ENCODE measurements at regions of chr14 and their contacts with region 1.

Region 1: GRCh38 chr14:69726761-69727511 is 40.0 kb upstream of the SRSF5 start:
- DNase-seq: peak; percentile 84
- ATAC-seq: peak; percentile 95
- H3K4me3 Mint-ChIP-seq: peak overlapping the region; percentile 64
- H3K27ac Mint-ChIP-seq: peak overlapping the region; percentile 78
- H3K4me1 Mint-ChIP-seq: peaks cover 36% of the 10 kb centered on the region
- H3K27me3 Mint-ChIP-seq: peaks cover 8% of the 10 kb centered on the region

Region 2: DNA sequence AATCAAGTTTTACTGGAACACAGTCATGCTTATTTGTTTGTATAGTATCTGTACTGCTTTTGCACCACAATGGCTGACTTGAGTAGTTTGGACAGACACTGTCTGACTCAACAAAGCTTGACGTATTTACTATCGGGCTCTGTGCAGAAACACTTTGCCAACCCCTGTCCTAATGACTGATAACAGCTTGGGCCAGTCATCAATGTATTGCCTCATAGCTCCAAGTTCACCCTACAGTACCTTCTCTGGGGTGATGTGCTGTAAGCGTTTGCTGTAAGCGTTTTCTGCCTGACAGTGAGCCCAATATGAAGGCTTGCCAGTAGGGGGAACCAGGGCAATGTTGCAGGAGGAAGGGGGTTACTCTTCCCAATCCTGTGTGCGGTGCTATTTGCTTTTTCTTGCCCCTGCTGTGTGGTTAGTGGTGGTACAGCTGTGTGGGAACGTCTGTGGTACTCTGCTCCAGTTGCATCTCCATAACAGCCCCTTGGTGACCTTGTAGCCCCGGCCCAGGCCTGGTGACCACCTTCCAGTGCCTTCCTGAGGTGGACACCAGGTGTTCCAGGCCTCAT is 146.8 kb before region 1 on chr14:
- CTCF ChIA-PET with region 1: interaction called, 44 read pairs
- POLR2A ChIA-PET with region 1: interaction called, 4 read pairs
- DNase-seq: peak; percentile 42
- ATAC-seq: peak; percentile 42
- H3K4me3 Mint-ChIP-seq: no peak overlapping the region
- H3K27ac Mint-ChIP-seq: no peak overlapping the region
- H3K4me1 Mint-ChIP-seq: peaks cover 2% of the 10 kb centered on the region
- H3K27me3 Mint-ChIP-seq: peaks cover 34% of the 10 kb centered on the region

Region 3: DNA sequence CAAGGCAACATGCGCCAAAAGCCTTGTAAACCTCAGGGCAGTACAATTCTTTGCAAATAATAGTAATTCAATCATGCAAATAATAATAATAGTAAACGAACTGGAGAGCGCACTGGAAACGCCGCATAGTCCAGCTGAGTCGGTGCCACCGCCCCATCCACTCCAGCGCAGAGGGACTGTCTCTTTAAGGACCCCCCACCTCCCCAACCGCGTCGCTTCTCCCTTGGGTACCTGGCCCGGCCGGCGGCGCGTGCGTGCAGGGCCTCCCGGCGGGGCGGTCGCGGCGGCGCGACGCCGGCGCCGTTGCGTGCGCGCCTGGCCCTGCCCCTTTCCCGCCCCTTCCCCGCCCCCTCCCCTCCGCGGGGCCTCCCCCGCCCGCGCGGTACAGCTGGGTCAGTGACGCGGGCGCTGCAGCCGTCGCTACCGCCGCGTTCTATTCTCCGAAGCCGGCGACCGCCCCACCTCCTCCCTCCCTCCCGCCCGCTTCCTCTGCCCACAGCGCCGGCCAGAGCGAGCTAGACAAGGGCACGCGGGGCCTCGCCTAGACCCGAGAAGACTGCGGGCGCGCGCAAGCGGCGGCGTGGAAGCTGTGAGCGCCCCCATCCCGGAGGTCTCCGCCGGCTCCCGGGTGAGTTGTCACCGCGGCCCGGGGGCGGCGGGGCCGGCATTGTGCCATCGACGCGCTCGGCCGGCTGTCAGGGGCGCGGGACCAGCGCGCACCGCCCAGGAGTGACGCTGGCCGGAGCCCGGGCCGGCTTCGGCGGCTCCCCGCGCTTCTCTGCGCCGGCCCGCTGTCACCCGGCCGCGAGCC is 115.5 kb before region 1 on chr14 and contains the start of gene SUSD6:
- CTCF ChIA-PET with region 1: interaction called, 79 read pairs
- POLR2A ChIA-PET with region 1: interaction called, 4 read pairs
- DNase-seq: peak; percentile 89
- ATAC-seq: peak; percentile 72
- H3K4me3 Mint-ChIP-seq: peak within 1 kb of the TSS; percentile 92
- H3K27ac Mint-ChIP-seq: peak within 1 kb of the TSS; percentile 99
- H3K4me1 Mint-ChIP-seq: peaks cover 50% of the 10 kb centered on the region
- H3K27me3 Mint-ChIP-seq: no peaks in the 10 kb centered on the region
- total RNA-seq, gene SUSD6: 40.0 to 43.1 TPM

Region 4: DNA sequence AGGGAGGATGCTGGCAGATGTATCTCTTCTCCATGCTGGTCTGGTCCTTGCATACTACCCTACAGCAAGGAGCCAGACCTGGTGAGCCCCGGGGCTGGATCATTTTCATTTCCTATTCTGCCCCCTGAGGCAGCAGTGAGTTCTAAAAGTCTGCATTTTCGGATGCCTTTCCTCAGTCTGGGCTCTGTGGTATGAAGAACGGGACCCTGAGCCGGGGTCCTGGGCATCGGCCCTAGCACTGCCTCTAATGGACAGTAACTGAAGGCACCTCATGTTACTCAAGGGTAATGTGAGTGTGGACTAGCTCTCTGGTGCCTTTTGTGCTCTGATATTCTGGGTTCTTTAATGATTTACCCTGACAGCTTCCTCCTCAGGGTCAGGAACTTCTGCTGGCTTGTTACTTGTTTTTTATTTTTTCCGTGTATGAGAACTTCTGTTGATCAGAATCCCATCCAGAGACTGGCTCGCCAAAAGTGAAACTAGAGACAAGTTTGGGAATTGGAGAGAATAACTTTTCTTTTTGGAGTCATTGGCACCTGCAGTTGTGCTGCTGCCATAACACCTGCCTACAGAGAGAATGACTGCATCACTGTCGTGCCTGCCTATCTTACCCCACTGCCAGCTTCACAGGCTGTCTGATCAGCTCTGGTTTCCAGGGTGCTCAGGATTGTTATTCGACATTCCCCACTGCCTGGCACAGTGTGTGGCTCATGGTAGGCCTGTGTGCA is 53.2 kb before region 1 on chr14:
- CTCF ChIA-PET with region 1: interaction called, 14 read pairs
- POLR2A ChIA-PET with region 1: no interaction called
- DNase-seq: no peak
- ATAC-seq: peak; percentile 25
- H3K4me3 Mint-ChIP-seq: peak overlapping the region; percentile 24
- H3K27ac Mint-ChIP-seq: peak overlapping the region; percentile 85
- H3K4me1 Mint-ChIP-seq: peaks cover 80% of the 10 kb centered on the region
- H3K27me3 Mint-ChIP-seq: no peaks in the 10 kb centered on the region

Region 5: GRCh38 chr14:69741055-69741454 is 14.1 kb after region 1 on chr14:
- CTCF ChIA-PET with region 1: interaction called, 11 read pairs
- POLR2A ChIA-PET with region 1: no interaction called
- DNase-seq: no peak
- ATAC-seq: no peak
- H3K4me3 Mint-ChIP-seq: no peak overlapping the region
- H3K27ac Mint-ChIP-seq: no peak overlapping the region
- H3K4me1 Mint-ChIP-seq: peaks cover 2% of the 10 kb centered on the region
- H3K27me3 Mint-ChIP-seq: peaks cover 2% of the 10 kb centered on the region

Region 6: DNA sequence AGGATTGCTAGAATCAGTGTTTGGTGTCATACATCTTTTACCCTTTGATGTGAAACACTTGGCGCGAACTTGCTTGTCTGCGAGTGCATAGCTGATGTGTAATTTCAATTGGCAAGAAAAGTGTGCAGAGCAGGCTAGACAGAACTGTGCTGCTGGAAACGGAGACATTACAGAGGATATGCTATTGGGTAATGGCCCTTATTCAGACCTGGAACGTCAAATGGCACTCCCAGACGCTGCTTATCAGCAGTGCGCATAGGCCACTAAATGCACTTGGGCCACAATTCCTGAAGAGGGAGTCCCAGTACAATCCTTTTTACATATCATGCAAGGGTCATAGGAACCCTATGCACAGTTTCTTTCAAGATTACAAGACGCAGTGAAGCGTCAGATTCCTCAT is 85.8 kb after region 1 on chr14:
- CTCF ChIA-PET with region 1: no interaction called
- POLR2A ChIA-PET with region 1: no interaction called
- DNase-seq: no peak
- ATAC-seq: no peak
- H3K4me3 Mint-ChIP-seq: no peak overlapping the region
- H3K27ac Mint-ChIP-seq: no peak overlapping the region
- H3K4me1 Mint-ChIP-seq: no peaks in the 10 kb centered on the region
- H3K27me3 Mint-ChIP-seq: peaks cover 7% of the 10 kb centered on the region

Measured in activated CD8-positive, alpha-beta T cell treated with anti-CD3 and anti-CD28 coated beads, Interleukin-2, amount 10 ng/mL, durations not matched to agents 7 days and 5 days (primary cell).